Endothelial cell of umbilical vein (primary cell): ENCODE measurements at regions of chr6 and their contacts with region 1.

Region 1: DNA sequence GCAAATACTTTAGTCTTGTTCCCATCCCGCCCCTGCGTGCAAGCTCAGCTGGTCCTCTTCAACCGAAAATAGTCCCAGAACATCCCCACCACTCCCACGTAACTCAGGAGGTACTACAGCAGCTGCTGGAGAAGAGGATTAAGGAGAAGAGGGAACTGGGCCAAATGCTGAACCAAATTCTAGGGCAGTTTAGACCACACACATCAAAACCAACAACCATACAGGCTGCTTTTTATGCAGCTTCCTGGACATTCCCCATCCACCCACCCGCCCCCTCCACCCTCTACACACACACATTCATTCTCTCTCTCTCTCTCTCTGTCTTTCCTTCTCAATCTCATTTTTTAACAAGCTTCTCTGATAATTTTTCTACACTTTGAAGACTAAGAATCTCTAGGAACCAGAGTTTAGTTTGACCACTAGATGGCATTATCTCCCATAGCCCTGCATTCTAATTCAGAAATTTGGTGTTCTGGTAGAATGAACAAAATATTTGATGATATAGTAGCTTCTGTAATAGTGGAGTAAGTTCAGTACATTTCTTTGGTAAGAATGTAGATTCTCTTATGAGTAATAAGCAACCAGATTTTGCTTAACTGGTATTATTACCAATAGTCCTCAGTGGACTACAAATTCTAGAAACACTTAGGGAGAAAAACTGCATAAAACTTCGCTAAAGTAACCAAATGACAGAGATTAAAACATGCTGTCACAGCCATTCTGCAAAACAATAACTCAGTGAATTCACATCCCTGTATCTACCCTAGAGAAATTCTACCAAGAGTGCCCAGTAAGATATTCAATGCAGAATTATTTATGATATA is 52.1 kb upstream of the BEND6 start:
- DNase-seq: peak; percentile 49
- H3K4me3 ChIP-seq: no peak overlapping the region
- H3K27ac ChIP-seq: no peak overlapping the region
- H3K4me1 ChIP-seq: peaks cover 10% of the 10 kb centered on the region
- H3K27me3 ChIP-seq: no peaks in the 10 kb centered on the region
- CTCF ChIP-seq: peak; percentile 50 to 52
- POLR2A ChIP-seq: no peak

Region 2: GRCh38 chr6:56542364-56543331 is 360.2 kb before region 1 on chr6:
- CTCF ChIA-PET with region 1: no interaction called
- POLR2A ChIA-PET with region 1: no interaction called
- dilution Hi-C with region 1: no loop called
- intact Hi-C with region 1: no loop called
- DNase-seq: peak; percentile 97
- H3K4me3 ChIP-seq: peak overlapping the region; percentile 41 to 84 (median 66)
- H3K27ac ChIP-seq: peak overlapping the region; percentile 80
- H3K4me1 ChIP-seq: peaks cover 41% of the 10 kb centered on the region
- H3K27me3 ChIP-seq: no peaks in the 10 kb centered on the region
- CTCF ChIP-seq: peak in 1 of 2 donors; percentile 22
- POLR2A ChIP-seq: peak; percentile 82

Region 3: GRCh38 chr6:56851541-56852259 is 51.2 kb before region 1 on chr6:
- CTCF ChIA-PET with region 1: interaction called, 64 read pairs
- POLR2A ChIA-PET with region 1: no interaction called
- dilution Hi-C with region 1: no loop called
- intact Hi-C with region 1: loop called (anchors 2 kb)
- DNase-seq: peak; percentile 95
- H3K4me3 ChIP-seq: peak overlapping the region; percentile 63 to 97 (median 94)
- H3K27ac ChIP-seq: peak overlapping the region; percentile 83
- H3K4me1 ChIP-seq: peaks cover 29% of the 10 kb centered on the region
- H3K27me3 ChIP-seq: no peaks in the 10 kb centered on the region
- CTCF ChIP-seq: peak; percentile 47 to 70
- POLR2A ChIP-seq: peak; percentile 78

Region 4: DNA sequence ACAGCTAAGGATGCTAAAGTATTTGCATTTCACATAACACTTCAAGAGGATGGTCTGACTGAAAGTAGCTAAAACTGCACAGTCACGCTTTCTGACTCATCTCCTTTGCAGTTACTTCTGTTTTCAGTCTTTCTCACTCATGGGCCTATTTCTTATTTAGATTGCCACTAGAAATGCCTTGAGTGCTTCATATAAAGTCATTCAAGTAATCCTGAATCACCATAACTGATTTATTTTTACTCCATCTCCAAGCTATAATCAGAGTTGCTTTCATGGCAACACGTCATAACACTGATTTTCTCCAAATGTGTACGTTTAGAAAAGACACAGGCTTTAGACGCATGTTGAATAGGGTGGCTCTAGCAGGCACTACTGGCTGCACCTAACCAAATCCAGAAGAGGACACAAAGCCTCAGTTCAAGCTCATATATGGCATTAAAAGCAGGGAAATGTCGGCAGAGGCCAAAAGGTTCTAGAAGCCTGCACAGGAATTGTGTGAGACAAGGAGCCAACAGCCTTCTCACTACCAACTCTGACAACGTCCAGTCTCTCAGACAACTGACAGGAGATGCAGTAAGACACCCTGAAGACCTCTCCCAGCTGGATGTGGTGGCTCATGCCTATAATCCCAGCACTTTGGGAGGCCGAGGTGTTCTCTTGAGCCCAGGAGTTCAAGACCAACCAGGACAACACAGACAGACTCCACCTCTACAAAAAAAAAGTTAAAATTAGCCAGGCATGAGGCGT is 12.0 kb before region 1 on chr6:
- CTCF ChIA-PET with region 1: interaction called, 24 read pairs
- POLR2A ChIA-PET with region 1: no interaction called
- dilution Hi-C with region 1: no loop called
- intact Hi-C with region 1: no loop called
- DNase-seq: peak; percentile 71
- H3K4me3 ChIP-seq: no peak overlapping the region
- H3K27ac ChIP-seq: peak overlapping the region; percentile 65
- H3K4me1 ChIP-seq: peaks cover 30% of the 10 kb centered on the region
- H3K27me3 ChIP-seq: no peaks in the 10 kb centered on the region
- CTCF ChIP-seq: no peak
- POLR2A ChIP-seq: peak; percentile 26

Region 5: GRCh38 chr6:56927538-56928453 is 24.9 kb after region 1 on chr6:
- CTCF ChIA-PET with region 1: interaction called, 11 read pairs
- POLR2A ChIA-PET with region 1: no interaction called
- dilution Hi-C with region 1: no loop called
- intact Hi-C with region 1: no loop called
- DNase-seq: no peak
- H3K4me3 ChIP-seq: no peak overlapping the region
- H3K27ac ChIP-seq: no peak overlapping the region
- H3K4me1 ChIP-seq: no peaks in the 10 kb centered on the region
- H3K27me3 ChIP-seq: no peaks in the 10 kb centered on the region
- CTCF ChIP-seq: no peak
- POLR2A ChIP-seq: no peak

Region 6: GRCh38 chr6:57021086-57021720 is 118.3 kb after region 1 on chr6:
- CTCF ChIA-PET with region 1: interaction called, 21 read pairs
- POLR2A ChIA-PET with region 1: no interaction called
- dilution Hi-C with region 1: no loop called
- intact Hi-C with region 1: loop called (anchors 1 kb)
- DNase-seq: peak; percentile 54
- H3K4me3 ChIP-seq: no peak overlapping the region
- H3K27ac ChIP-seq: no peak overlapping the region
- H3K4me1 ChIP-seq: peaks cover 4% of the 10 kb centered on the region
- H3K27me3 ChIP-seq: no peaks in the 10 kb centered on the region
- CTCF ChIP-seq: peak; percentile 21 to 39
- POLR2A ChIP-seq: no peak

Region 7: DNA sequence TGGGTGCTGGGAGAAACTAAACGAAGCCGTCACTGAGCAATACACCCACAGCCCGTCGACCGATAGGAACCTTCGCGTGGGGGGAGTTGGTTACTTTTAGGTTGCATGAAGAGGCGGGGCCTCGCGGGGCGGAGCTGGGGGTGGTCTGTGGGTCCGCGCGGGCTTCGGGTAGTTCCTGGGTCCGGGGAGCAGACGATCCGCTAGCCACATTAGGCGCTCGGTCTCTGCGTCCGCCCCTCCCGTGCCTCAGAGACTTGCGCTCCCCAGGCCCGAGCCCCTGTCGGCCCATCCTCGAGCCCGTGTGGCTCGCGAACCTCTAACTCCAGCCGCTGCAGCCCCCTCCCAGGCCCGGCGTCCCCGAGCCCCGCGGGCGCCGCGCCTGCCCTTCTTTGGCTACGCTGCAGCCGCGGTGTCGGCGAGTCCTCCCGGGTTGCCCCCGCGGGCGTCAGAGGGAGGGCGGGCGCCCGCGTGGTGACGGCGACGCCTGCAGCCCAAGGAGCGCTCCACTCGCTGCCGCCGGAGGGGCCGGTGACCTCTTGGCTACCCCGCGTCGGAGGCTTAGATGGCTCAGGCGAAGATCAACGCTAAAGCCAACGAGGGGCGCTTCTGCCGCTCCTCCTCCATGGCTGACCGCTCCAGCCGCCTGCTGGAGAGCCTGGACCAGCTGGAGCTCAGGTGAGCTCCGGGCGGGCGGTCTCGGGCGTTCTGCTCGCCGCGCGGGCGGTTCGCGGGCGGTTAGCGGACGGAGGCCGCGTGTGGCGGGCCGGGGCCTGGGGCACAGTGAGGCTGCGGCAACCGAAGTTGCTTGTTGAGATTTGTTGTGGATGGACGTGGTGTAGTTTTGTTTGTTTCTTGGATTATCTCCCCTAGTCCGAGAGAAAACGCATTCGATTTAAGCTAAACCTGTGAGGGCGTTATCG is 269.5 kb after region 1 on chr6 and contains the start of gene BAG2:
- CTCF ChIA-PET with region 1: interaction called, 4 read pairs
- POLR2A ChIA-PET with region 1: no interaction called
- dilution Hi-C with region 1: no loop called
- intact Hi-C with region 1: loop called (anchors 2 kb)
- DNase-seq: peak; percentile 80
- H3K4me3 ChIP-seq: peak within 1 kb of the TSS; percentile 71 to 79 (median 72)
- H3K27ac ChIP-seq: peak within 1 kb of the TSS; percentile 32
- H3K4me1 ChIP-seq: peaks cover 11% of the 10 kb centered on the region
- H3K27me3 ChIP-seq: no peaks in the 10 kb centered on the region
- CTCF ChIP-seq: peak in 1 of 2 donors; percentile 32
- POLR2A ChIP-seq: peak; percentile 28
- total RNA-seq, gene BAG2: 3.6 and 3.9 TPM in 2 replicates